ENCODE measurements at regions of chr10 and their contacts with region 1.

Region 1: DNA sequence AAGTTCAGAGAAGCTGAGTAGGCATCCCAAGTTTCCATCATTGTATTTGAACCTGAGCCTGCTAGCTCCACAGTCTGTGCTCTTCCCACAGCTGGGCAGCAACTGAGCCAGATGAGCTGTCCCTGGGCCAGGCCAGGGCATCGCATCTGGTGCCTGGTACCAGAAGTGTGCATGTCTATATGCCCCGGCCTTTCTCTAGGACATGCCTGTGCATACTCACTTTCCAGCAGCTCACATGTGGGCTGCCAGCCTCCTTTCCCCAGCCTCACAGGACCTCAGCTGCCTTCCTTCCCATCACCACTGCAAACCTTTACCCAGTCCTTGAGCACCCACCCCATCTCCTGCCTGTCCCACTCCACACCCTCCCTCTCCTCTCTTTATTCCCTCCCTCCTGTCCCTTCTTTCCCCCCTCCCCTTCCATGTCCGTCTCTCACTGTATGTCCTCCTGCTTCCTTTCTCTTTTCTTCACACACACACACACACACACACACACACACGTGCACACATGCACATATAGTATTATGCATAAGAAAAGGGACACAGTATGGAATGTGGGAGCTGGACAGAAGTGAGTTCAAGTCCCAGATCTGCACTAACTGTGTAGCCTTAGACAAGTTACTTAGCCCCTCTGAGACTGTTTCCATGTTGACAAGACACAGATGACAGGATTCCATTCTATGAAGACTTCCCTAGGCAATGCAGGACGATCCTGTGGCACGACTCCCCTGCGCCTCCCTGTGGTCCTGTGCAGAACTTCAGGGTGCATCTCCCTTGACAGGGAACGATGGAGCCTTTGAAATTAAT is 10.9 kb downstream of the CDHR1 start:
- DNase-seq: peak; percentile 28
- H3K4me3 Mint-ChIP-seq: no peak overlapping the region
- H3K27ac Mint-ChIP-seq: no peak overlapping the region
- H3K4me1 Mint-ChIP-seq: no peaks in the 10 kb centered on the region
- H3K27me3 Mint-ChIP-seq: peaks cover 6% of the 10 kb centered on the region

Region 2: DNA sequence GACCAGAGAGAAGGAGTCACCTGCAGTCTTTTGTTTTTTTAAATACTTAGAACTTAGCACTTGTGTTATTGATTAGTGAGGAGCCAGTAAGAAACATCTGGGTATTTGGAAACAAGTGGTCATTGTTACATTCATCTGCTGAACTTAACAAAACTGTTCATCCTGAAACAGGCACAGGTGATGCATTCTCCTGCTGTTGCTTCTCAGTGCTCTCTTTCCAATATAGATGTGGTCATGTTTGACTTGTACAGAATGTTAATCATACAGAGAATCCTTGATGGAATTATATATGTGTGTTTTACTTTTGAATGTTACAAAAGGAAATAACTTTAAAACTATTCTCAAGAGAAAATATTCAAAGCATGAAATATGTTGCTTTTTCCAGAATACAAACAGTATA is 52.5 kb before region 1 on chr10:
- intact Hi-C with region 1: loop called (anchors 1 kb)
- DNase-seq: no peak
- H3K4me3 Mint-ChIP-seq: no peak overlapping the region
- H3K27ac Mint-ChIP-seq: no peak overlapping the region
- H3K4me1 Mint-ChIP-seq: peaks cover 7% of the 10 kb centered on the region
- H3K27me3 Mint-ChIP-seq: no peaks in the 10 kb centered on the region

Measured in activated T-helper 2 cell treated with anti-CD3 and anti-CD28 coated beads, Interferon-gamma antibody, Interleukin-2, Interleukin-4, amounts not matched to agents 10 μg/mL and 5 μg/mL and 100 μg/mL, durations not matched to agents 14 hours and 24 hours and 36 hours (primary cell).